Caco-2 (cell line): ENCODE measurements at regions of chr17 and their contacts with region 1.

Region 1: GRCh38 chr17:7687908-7688807 is at the start of gene WRAP53:
- DNase-seq: peak; percentile 92 to 94
- H3K4me3 ChIP-seq: peak within 1 kb of the TSS; percentile 82
- H3K4me3 Mint-ChIP-seq: peak within 1 kb of the TSS; percentile 91
- H3K27ac Mint-ChIP-seq: peak within 1 kb of the TSS; percentile 100
- H3K4me1 ChIP-seq: 0 out of 2 replicates have a peak, but pooled peaks cover 6% of the 10 kb centered on the region
- H3K4me1 Mint-ChIP-seq: no peaks in the 10 kb centered on the region
- H3K27me3 ChIP-seq: no peaks in the 10 kb centered on the region
- H3K27me3 Mint-ChIP-seq: no peaks in the 10 kb centered on the region
- CTCF ChIP-seq: peak; percentile 82 to 86
- total RNA-seq, gene WRAP53: 13.6 and 15.2 TPM in 2 replicates

Region 2: DNA sequence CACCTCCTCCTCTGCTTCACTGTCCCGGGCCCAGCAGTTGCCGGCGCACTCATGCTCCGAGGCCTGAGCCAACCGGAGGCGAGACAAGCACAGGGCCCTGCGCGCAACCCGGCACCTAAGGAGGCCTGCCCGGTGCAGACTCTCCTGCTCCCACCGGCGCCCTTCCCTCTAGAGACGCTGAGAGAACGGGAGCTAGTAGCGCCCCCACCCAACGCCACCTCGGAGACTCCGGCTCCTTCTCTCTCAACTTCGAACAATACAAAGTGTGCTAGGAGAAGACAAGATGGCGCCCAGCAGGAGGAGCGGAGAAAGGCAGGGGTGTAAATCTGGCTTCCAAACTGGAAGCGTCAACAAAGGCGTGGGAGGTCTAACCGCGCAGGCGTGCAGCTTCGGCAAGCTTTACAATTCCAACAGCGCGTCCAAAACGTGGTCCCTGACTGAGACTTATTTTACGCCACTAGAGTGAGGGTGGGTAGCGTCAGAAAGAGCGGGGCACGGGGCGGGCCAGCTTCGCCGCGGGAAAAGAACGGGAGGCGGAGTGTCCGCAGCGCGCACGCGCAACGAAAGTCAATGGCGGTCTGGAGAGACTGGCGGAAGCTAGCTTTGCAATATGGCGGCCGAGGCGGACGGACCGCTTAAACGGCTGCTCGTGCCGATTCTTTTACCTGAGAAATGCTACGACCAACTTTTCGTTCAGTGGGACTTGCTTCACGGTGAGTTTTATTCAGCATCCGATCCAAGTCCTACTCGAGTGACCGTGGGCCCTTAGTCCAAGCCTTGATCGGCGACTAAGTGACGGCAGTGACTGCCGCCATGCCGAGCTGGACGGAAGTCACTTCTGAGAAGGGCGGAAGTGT is 104.7 kb before region 1 on chr17 and contains the start of gene MPDU1:
- CTCF ChIA-PET with region 1: interaction called, 7 read pairs
- POLR2A ChIA-PET with region 1: interaction called, 16 read pairs
- intact Hi-C with region 1: loop called (anchors 2 kb)
- DNase-seq: peak; percentile 92 to 93
- H3K4me3 ChIP-seq: peak within 1 kb of the TSS; percentile 59
- H3K4me3 Mint-ChIP-seq: peak within 1 kb of the TSS; percentile 96
- H3K27ac Mint-ChIP-seq: peak within 1 kb of the TSS; percentile 100
- H3K4me1 ChIP-seq: peaks cover 10% of the 10 kb centered on the region
- H3K4me1 Mint-ChIP-seq: peaks cover 25% of the 10 kb centered on the region
- H3K27me3 ChIP-seq: no peaks in the 10 kb centered on the region
- H3K27me3 Mint-ChIP-seq: no peaks in the 10 kb centered on the region
- CTCF ChIP-seq: no peak
- total RNA-seq, gene MPDU1: 44.2 and 49.7 TPM in 2 replicates

Region 3: DNA sequence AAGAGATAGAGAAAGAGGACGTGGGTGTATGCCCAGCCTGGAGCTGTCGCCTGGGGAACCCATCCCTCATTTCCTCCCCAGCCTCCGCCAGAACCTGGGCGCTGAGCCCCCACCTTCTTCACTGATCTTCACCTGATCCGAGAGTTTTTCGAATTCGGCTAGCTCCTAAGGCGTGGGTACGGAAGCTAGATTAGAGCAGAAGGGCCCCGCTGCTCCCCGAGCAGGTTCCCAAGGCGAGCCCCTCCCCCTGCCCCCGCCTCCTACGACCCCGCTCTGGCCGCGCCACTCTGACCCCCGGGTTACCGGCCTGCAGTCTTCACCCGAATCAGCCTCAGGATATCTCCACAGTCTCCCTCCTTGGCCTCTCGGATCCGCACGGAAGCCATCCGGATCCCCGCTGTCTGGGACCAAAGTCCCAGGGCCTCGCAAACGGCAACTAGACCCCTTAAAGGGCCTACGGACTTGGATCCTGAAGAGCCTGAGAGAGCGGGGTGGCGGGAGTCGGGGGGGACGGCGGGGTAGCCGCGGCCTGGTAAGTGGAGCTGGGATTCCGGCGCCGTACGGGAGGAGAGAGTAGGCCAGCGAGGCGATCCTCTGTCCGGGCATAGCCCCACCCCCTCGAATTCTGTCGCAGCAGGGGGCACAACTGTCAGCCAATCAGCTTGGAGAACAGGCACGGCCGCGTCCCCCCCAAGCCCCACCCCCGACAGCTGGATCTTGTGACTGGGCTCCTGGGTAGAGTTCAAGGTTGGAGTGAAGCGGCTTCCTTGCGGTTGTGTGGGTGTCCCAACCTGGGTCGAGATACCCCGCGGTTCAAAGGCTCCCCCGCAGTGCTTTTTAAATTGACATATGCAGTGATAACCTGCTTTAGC is 60.7 kb before region 1 on chr17 and contains the start of gene SAT2:
- CTCF ChIA-PET with region 1: interaction called, 5 read pairs
- POLR2A ChIA-PET with region 1: interaction called, 12 read pairs
- intact Hi-C with region 1: no loop called
- DNase-seq: peak; percentile 82 to 88
- H3K4me3 ChIP-seq: peak within 1 kb of the TSS; percentile 52
- H3K4me3 Mint-ChIP-seq: peak within 1 kb of the TSS; percentile 77
- H3K27ac Mint-ChIP-seq: no peak within 1 kb of the TSS
- H3K4me1 ChIP-seq: peaks cover 3% of the 10 kb centered on the region; the same call in 1 of the 2 replicates
- H3K4me1 Mint-ChIP-seq: no peaks in the 10 kb centered on the region
- H3K27me3 ChIP-seq: no peaks in the 10 kb centered on the region
- H3K27me3 Mint-ChIP-seq: no peaks in the 10 kb centered on the region
- CTCF ChIP-seq: no peak
- total RNA-seq, gene SAT2: 33.0 TPM in 2 replicates

Region 4: DNA sequence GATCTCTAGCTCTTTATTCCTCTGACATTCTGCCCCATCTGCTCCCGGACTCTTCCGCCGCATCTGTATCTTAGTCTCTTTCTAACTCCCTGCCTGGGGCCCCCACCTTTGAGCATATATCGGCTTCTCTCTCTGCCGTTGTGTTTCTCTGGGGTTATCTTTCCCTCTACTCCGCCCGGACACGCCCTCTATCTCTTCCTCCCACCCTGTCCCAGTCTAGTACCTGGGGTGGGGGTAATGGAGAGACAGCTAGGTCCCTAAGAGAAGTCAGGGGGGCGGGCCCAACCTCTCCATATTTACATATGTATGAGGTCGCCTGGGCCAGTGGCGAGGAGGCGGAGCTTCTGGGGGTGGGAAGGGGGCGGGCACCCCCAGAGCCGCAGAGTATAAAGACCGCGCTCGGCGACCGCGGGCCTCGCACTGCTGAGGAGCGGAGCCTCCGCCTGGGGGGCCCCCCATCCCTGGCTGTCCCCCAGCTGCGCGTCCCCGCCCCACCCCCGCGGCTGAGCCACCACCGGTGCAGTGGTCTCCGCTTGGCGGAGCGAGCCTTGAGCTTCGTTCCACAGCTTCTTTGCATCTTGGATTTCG is 37.6 kb before region 1 on chr17 and contains the start of gene ATP1B2:
- CTCF ChIA-PET with region 1: interaction called, 10 read pairs
- POLR2A ChIA-PET with region 1: interaction called, 24 read pairs
- intact Hi-C with region 1: no loop called
- DNase-seq: peak; percentile 68 to 84
- H3K4me3 ChIP-seq: peak within 1 kb of the TSS; percentile 35
- H3K4me3 Mint-ChIP-seq: peak within 1 kb of the TSS; percentile 80
- H3K27ac Mint-ChIP-seq: no peak within 1 kb of the TSS
- H3K4me1 ChIP-seq: no peaks in the 10 kb centered on the region
- H3K4me1 Mint-ChIP-seq: peaks cover 10% of the 10 kb centered on the region
- H3K27me3 ChIP-seq: no peaks in the 10 kb centered on the region
- H3K27me3 Mint-ChIP-seq: peaks cover 9% of the 10 kb centered on the region
- CTCF ChIP-seq: no peak
- total RNA-seq, gene ATP1B2: 0.11 and 0.14 TPM in 2 replicates

Region 5: DNA sequence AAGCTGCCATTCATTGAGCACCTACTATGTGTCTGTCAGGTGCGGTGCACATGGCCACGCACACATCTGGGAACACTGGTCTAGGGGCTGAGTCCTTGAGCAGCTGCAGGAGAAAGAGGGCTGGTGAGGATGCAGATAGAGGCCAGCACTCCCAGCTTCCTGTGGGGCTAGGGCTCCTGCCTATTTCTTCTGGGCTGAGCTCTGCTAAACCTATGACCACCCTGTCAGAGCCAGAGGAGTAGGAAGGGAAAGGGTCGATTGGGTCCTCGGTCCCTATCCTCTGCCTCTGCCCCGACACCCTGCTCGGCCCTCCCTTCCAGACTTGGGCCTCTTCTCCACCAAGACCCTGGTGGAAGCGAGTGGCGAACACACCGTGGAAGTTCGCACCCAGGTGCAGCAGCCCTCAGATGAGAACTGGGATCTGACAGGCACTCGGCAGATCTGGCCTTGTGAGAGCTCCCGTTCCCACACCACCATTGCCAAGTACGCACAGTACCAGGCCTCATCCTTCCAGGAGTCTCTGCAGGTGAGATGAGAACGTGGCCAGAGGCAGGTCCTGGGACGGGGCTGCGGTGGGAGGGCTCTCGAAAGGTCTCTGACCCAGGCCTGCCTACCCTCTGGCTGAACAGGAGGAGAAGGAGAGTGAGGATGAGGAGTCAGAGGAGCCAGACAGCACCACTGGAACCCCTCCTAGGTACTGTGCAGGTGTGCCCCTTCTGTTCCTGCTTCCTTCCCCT is 162.7 kb after region 1 on chr17:
- CTCF ChIA-PET with region 1: no interaction called
- POLR2A ChIA-PET with region 1: no interaction called
- intact Hi-C with region 1: no loop called
- DNase-seq: no peak
- H3K4me3 ChIP-seq: no peak overlapping the region
- H3K4me3 Mint-ChIP-seq: no peak overlapping the region
- H3K27ac Mint-ChIP-seq: no peak overlapping the region
- H3K4me1 ChIP-seq: no peaks in the 10 kb centered on the region
- H3K4me1 Mint-ChIP-seq: peaks cover 3% of the 10 kb centered on the region
- H3K27me3 ChIP-seq: no peaks in the 10 kb centered on the region
- H3K27me3 Mint-ChIP-seq: no peaks in the 10 kb centered on the region
- CTCF ChIP-seq: no peak

Region 6: DNA sequence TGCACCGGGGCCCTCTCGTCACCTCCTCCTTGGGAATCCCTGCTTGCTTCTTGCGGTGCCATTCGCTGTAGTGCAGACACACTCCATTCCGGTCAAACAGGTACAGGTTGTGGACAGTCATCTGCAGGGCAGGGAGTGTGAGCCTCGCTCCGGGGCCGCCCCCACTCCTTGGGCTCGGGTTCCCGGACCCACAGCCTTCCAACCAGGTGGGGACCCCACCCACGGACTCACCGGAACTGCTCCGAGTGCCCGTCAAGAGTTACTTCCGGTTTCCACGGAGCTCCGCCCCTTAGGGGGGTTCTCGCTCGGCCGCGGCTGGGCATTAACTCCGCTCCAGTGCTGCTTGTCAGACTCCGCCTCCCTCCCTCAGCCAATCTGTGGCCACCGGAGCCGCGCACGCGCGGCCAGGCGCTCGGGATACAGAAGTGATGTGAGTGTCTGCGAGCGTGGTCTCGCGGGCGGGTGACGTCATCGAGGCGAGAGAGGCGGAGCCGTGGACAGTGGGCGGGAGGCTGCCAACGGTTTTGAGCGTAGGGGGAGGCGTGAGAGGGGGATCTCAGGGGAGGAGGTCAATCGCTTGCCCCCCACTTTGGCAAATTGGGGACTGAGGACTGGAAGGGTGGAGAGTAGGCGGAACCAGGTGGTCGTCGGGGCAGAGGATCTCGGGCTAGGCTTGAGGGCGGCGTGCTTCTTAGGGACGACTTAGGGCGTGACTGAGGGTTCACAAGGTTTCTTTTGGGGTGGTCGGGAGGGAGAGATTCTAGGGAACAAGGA is 243.7 kb after region 1 on chr17 and contains the starts of genes CNTROB and TRAPPC1:
- CTCF ChIA-PET with region 1: no interaction called
- POLR2A ChIA-PET with region 1: no interaction called
- intact Hi-C with region 1: no loop called
- DNase-seq: peak; percentile 95 to 97
- H3K4me3 ChIP-seq: peak within 1 kb of the TSS; percentile 80
- H3K4me3 Mint-ChIP-seq: peak within 1 kb of the TSS; percentile 99
- H3K27ac Mint-ChIP-seq: peak within 1 kb of the TSS; percentile 97
- H3K4me1 ChIP-seq: 0 out of 2 replicates have a peak, but pooled peaks cover 2% of the 10 kb centered on the region
- H3K4me1 Mint-ChIP-seq: peaks cover 11% of the 10 kb centered on the region
- H3K27me3 ChIP-seq: no peaks in the 10 kb centered on the region
- H3K27me3 Mint-ChIP-seq: no peaks in the 10 kb centered on the region
- CTCF ChIP-seq: no peak
- total RNA-seq, gene CNTROB: 22.6 and 24.2 TPM in 2 replicates
- total RNA-seq, gene TRAPPC1: 75.5 and 96.2 TPM in 2 replicates